Activated CD8-positive, alpha-beta T cell treated with anti-CD3 and anti-CD28 coated beads, Interleukin-2, amount 10 ng/mL, durations not matched to agents 7 days and 5 days (primary cell): ENCODE measurements at regions of chr11 and their contacts with region 1.

Region 1: GRCh38 chr11:62787005-62787759 is at the start of gene TMEM179B:
- DNase-seq: peak; percentile 100
- ATAC-seq: peak; percentile 70
- H3K4me3 Mint-ChIP-seq: peak within 1 kb of the TSS; percentile 96
- H3K27ac Mint-ChIP-seq: peak within 1 kb of the TSS; percentile 98
- H3K4me1 Mint-ChIP-seq: peaks cover 46% of the 10 kb centered on the region
- H3K27me3 Mint-ChIP-seq: no peaks in the 10 kb centered on the region
- total RNA-seq, gene TMEM179B: 37.3 to 40.8 TPM

Region 2: DNA sequence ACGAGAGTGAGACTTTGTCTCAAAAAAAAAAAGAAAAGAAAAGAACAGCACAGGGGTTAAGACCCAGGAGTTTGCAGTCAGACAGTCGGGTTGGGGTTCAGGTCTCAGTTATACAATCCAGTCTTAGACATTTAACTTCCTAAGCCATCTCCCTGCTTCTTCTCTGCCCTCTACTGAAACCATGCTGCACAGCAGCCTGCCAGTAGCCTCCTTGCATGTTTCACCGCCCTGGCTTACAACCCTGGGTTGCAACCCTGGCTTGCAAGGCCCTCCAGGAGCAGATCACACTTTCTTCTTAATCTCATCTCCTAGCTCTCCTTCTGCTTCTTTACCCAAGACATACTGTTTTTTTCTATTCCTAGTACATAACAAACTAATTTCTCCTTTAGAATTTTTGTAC is 159.5 kb before region 1 on chr11:
- CTCF ChIA-PET with region 1: no interaction called
- POLR2A ChIA-PET with region 1: no interaction called
- DNase-seq: no peak
- ATAC-seq: peak; percentile 24
- H3K4me3 Mint-ChIP-seq: no peak overlapping the region
- H3K27ac Mint-ChIP-seq: no peak overlapping the region
- H3K4me1 Mint-ChIP-seq: peaks cover 2% of the 10 kb centered on the region
- H3K27me3 Mint-ChIP-seq: no peaks in the 10 kb centered on the region

Region 3: GRCh38 chr11:62726915-62727763 is 60.0 kb before region 1 on chr11 and contains the start of gene HNRNPUL2:
- CTCF ChIA-PET with region 1: interaction called, 12 read pairs
- POLR2A ChIA-PET with region 1: interaction called, 20 read pairs
- DNase-seq: peak; percentile 99
- ATAC-seq: peak; percentile 87
- H3K4me3 Mint-ChIP-seq: peak within 1 kb of the TSS; percentile 94
- H3K27ac Mint-ChIP-seq: peak within 1 kb of the TSS; percentile 96
- H3K4me1 Mint-ChIP-seq: peaks cover 47% of the 10 kb centered on the region
- H3K27me3 Mint-ChIP-seq: no peaks in the 10 kb centered on the region
- total RNA-seq, gene HNRNPUL2: 65.4 to 67.0 TPM

Region 4: GRCh38 chr11:62771144-62772021 is 15.8 kb before region 1 on chr11 and contains the start of gene TAF6L:
- CTCF ChIA-PET with region 1: interaction called, 144 read pairs
- POLR2A ChIA-PET with region 1: interaction called, 34 read pairs
- DNase-seq: peak; percentile 96
- ATAC-seq: peak; percentile 91
- H3K4me3 Mint-ChIP-seq: peak within 1 kb of the TSS; percentile 91
- H3K27ac Mint-ChIP-seq: peak within 1 kb of the TSS; percentile 93
- H3K4me1 Mint-ChIP-seq: peaks cover 27% of the 10 kb centered on the region
- H3K27me3 Mint-ChIP-seq: no peaks in the 10 kb centered on the region
- total RNA-seq, gene TAF6L: 21.8 to 23.7 TPM

Region 5: DNA sequence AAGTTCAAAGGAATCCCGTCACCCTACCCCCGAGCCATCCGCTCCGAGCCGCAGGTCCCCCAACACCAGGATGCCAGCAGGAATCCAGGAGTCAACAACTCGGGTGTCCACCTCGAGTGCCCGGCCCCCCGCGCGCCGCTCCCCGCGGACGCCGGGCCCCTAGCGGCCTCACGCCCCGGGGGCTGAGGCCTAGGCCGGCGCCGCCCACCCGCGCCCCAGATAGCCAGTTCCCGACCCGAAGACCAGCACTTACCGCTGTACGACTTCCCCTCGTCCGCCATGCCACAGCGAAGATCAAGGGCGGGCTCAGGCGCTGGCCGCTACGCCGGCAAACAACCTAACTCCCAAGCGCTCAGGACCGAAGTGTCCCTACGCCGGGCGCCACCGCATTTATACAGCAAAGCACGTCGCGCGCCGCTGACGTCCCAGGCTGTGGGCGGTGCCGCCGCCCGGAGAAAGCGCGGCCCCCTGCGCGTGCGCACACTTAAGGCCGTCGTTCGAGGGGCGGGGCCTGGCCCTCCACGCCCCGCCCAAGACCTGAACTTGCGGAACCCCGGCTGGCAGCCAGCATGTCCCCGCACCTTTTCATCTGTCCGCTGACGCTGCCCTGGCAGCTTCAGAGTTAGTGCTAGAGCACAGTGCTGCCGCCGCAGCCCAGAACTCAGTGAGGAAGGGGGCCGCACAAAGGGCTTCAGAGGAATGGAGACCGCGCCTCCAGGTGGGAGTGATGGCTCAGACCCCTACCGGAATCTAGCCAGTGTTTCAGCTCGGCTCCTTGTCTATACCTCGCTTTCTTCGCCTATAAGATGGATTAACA is 18.1 kb after region 1 on chr11 and contains the start of gene NXF1:
- CTCF ChIA-PET with region 1: interaction called, 31 read pairs
- POLR2A ChIA-PET with region 1: interaction called, 25 read pairs
- DNase-seq: peak; percentile 95
- ATAC-seq: peak; percentile 81
- H3K4me3 Mint-ChIP-seq: peak within 1 kb of the TSS; percentile 99
- H3K27ac Mint-ChIP-seq: peak within 1 kb of the TSS; percentile 95
- H3K4me1 Mint-ChIP-seq: peaks cover 37% of the 10 kb centered on the region
- H3K27me3 Mint-ChIP-seq: no peaks in the 10 kb centered on the region
- total RNA-seq, gene NXF1: 110 to 111 TPM

Region 6: GRCh38 chr11:62831520-62832335 is 44.5 kb after region 1 on chr11 and contains the start of gene STX5:
- CTCF ChIA-PET with region 1: interaction called, 32 read pairs
- POLR2A ChIA-PET with region 1: interaction called, 16 read pairs
- DNase-seq: peak; percentile 100
- ATAC-seq: peak; percentile 91
- H3K4me3 Mint-ChIP-seq: peak within 1 kb of the TSS; percentile 92
- H3K27ac Mint-ChIP-seq: peak within 1 kb of the TSS; percentile 98
- H3K4me1 Mint-ChIP-seq: peaks cover 39% of the 10 kb centered on the region
- H3K27me3 Mint-ChIP-seq: no peaks in the 10 kb centered on the region
- total RNA-seq, gene STX5: 30.4 to 32.7 TPM

Region 7: GRCh38 chr11:62860835-62861563 is 73.8 kb after region 1 on chr11:
- CTCF ChIA-PET with region 1: interaction called, 80 read pairs
- POLR2A ChIA-PET with region 1: interaction called, 54 read pairs
- DNase-seq: no peak
- ATAC-seq: no peak
- H3K4me3 Mint-ChIP-seq: no peak overlapping the region
- H3K27ac Mint-ChIP-seq: peak overlapping the region; percentile 67
- H3K4me1 Mint-ChIP-seq: peaks cover 63% of the 10 kb centered on the region
- H3K27me3 Mint-ChIP-seq: no peaks in the 10 kb centered on the region

Region 8: GRCh38 chr11:62880803-62881578 is 93.8 kb after region 1 on chr11 and contains the start of gene SLC3A2:
- CTCF ChIA-PET with region 1: interaction called, 46 read pairs
- POLR2A ChIA-PET with region 1: interaction called, 22 read pairs
- DNase-seq: peak; percentile 92
- ATAC-seq: peak; percentile 87
- H3K4me3 Mint-ChIP-seq: peak within 1 kb of the TSS; percentile 100
- H3K27ac Mint-ChIP-seq: peak within 1 kb of the TSS; percentile 100
- H3K4me1 Mint-ChIP-seq: peaks cover 49% of the 10 kb centered on the region
- H3K27me3 Mint-ChIP-seq: no peaks in the 10 kb centered on the region
- total RNA-seq, gene SLC3A2: 190 to 202 TPM

Region 9: GRCh38 chr11:62909107-62909894 is 122.1 kb after region 1 on chr11:
- CTCF ChIA-PET with region 1: no interaction called
- POLR2A ChIA-PET with region 1: no interaction called
- DNase-seq: no peak
- ATAC-seq: no peak
- H3K4me3 Mint-ChIP-seq: no peak overlapping the region
- H3K27ac Mint-ChIP-seq: no peak overlapping the region
- H3K4me1 Mint-ChIP-seq: peaks cover 15% of the 10 kb centered on the region
- H3K27me3 Mint-ChIP-seq: peaks cover 18% of the 10 kb centered on the region

Region 10: DNA sequence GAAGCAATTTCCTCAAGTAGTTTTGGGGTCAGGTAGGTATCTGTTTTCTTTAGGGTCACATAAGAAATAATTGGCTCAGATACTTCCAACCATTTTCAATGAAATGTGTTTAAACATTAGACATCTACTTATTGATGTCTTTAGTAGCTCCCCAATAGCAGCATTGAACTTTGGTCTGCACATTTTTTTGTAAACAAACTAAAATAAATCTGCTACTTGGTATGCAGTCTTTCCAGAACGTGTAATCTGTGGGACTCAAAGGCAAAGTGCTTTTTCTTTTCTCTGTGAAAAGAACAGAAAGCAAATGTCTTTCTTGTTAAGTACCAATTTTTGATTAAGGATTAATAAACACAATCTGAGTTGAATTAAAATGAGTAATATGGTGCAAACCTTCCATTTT is 442.6 kb after region 1 on chr11:
- CTCF ChIA-PET with region 1: no interaction called
- POLR2A ChIA-PET with region 1: no interaction called
- DNase-seq: no peak
- ATAC-seq: no peak
- H3K4me3 Mint-ChIP-seq: no peak overlapping the region
- H3K27ac Mint-ChIP-seq: no peak overlapping the region
- H3K4me1 Mint-ChIP-seq: no peaks in the 10 kb centered on the region
- H3K27me3 Mint-ChIP-seq: peaks cover 4% of the 10 kb centered on the region

Region 11: DNA sequence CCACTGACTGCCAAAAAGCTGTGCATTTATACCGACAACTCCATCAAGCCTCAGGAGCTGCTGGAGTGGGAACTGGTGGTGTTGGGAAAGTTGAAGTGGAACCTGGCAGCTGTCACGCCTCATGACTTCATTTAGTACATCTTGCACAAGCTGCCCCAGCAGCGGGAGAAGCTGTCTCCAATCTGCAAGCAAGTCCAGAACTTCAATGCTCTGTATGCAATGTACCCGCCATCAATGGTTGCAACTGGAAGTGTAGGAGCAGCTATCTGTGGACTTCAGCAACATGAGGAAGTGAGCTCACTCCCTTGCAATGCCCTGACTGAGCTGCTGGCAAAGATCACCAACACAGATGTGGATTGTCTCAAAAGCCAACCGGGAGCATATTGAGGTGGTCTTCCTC is 456.4 kb after region 1 on chr11 and contains the start of gene SLC22A25:
- CTCF ChIA-PET with region 1: no interaction called
- POLR2A ChIA-PET with region 1: no interaction called
- DNase-seq: no peak
- ATAC-seq: no peak
- H3K4me3 Mint-ChIP-seq: no peak within 1 kb of the TSS
- H3K27ac Mint-ChIP-seq: no peak within 1 kb of the TSS
- H3K4me1 Mint-ChIP-seq: peaks cover 5% of the 10 kb centered on the region
- H3K27me3 Mint-ChIP-seq: peaks cover 6% of the 10 kb centered on the region
- total RNA-seq, gene SLC22A25: not detected